H1 (cell line): ENCODE measurements at regions of chr11 and their contacts with region 1.

Region 1: GRCh38 chr11:13354335-13354734 is 76.7 kb downstream of the BMAL1 start:
- DNase-seq: no peak
- H3K4me3 ChIP-seq: no peak overlapping the region
- H3K27ac ChIP-seq: no peak overlapping the region
- H3K4me1 ChIP-seq: peaks cover 0 to 4% (median 0%) of the 10 kb centered on the region in 4 experiments; a peak in 2 of 7 replicates
- H3K27me3 ChIP-seq: no peaks in the 10 kb centered on the region
- CTCF ChIP-seq: peak in 2 of 3 experiments; percentile 64; a peak in 3 of 4 replicates
- EP300 ChIP-seq: no peak
- POLR2A ChIP-seq: no peak
- RAD21 ChIP-seq: peak; percentile 52 to 62

Region 2: DNA sequence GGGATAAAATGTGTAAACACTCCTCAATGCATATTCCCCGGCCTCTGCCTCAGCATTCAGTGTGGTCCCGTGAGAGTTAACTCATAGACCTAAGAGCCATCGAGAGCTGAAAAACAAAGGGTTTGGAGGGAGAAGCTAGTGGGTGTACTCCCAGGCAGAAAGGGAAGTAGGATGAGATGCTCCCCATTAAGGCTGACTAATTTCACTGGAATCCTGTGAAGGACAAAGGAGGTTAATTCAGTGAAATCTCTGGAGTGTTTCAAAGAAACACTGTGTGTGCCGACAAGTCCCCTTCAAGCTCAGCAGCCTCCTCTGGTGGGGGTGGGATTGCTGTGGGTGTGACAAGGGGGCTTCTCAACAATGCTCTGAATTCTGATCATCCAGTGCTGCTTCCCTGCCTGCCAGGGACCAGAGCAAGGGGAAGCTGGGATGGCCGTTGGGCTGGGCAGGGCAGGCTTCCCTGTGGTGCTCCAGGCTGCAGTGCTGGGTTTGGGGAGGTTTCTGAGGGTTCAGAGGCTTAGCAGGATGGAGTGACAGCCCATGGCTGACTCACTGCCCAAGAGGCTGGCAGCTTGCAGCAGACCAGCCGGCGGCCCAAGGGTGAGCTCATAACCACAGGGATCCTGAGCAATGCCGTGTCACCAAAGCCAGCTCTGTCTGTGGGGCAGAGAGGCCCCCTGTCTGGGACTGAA is 138.2 kb before region 1 on chr11:
- CTCF ChIA-PET with region 1: interaction called, 10 read pairs
- POLR2A ChIA-PET with region 1: no interaction called
- DNase-seq: peak in 1 of 2 experiments; percentile 56
- H3K4me3 ChIP-seq: no peak overlapping the region
- H3K27ac ChIP-seq: no peak overlapping the region
- H3K4me1 ChIP-seq: peaks cover 0 to 6% (median 2%) of the 10 kb centered on the region in 4 experiments; a peak in 2 of 7 replicates
- H3K27me3 ChIP-seq: no peaks in the 10 kb centered on the region
- CTCF ChIP-seq: no peak
- EP300 ChIP-seq: no peak
- POLR2A ChIP-seq: no peak
- RAD21 ChIP-seq: no peak

Region 3: GRCh38 chr11:13384908-13385640 is 30.7 kb after region 1 on chr11:
- CTCF ChIA-PET with region 1: interaction called, 129 read pairs
- POLR2A ChIA-PET with region 1: no interaction called
- DNase-seq: peak; percentile 15 to 58
- H3K4me3 ChIP-seq: no peak overlapping the region
- H3K27ac ChIP-seq: no peak overlapping the region
- H3K4me1 ChIP-seq: no peaks in the 10 kb centered on the region
- H3K27me3 ChIP-seq: no peaks in the 10 kb centered on the region
- CTCF ChIP-seq: peak in 2 of 3 experiments; percentile 58 to 68; a peak in 3 of 4 replicates
- EP300 ChIP-seq: no peak
- POLR2A ChIP-seq: no peak
- RAD21 ChIP-seq: peak; percentile 59 to 67